ENCODE measurements at regions of chr4 and their contacts with region 1.

Region 1: GRCh38 chr4:2536193-2537010 is at the start of gene FAM193A:
- DNase-seq: peak; percentile 94
- ATAC-seq: peak; percentile 96
- H3K4me3 ChIP-seq: peak within 1 kb of the TSS; percentile 95
- H3K27ac ChIP-seq: peak within 1 kb of the TSS; percentile 83
- H3K4me1 ChIP-seq: peaks cover 8% of the 10 kb centered on the region
- H3K27me3 ChIP-seq: no peaks in the 10 kb centered on the region
- CTCF ChIP-seq: no peak
- EP300 ChIP-seq: 0 out of 4 replicates have a peak, but pooled peaks of 1 of the 2 experiments have one; percentile 49
- POLR2A ChIP-seq: peak; percentile 81
- RAD21 ChIP-seq: no peak
- polyA plus RNA-seq, gene FAM193A: 0.52 to 0.91 TPM

Region 2: DNA sequence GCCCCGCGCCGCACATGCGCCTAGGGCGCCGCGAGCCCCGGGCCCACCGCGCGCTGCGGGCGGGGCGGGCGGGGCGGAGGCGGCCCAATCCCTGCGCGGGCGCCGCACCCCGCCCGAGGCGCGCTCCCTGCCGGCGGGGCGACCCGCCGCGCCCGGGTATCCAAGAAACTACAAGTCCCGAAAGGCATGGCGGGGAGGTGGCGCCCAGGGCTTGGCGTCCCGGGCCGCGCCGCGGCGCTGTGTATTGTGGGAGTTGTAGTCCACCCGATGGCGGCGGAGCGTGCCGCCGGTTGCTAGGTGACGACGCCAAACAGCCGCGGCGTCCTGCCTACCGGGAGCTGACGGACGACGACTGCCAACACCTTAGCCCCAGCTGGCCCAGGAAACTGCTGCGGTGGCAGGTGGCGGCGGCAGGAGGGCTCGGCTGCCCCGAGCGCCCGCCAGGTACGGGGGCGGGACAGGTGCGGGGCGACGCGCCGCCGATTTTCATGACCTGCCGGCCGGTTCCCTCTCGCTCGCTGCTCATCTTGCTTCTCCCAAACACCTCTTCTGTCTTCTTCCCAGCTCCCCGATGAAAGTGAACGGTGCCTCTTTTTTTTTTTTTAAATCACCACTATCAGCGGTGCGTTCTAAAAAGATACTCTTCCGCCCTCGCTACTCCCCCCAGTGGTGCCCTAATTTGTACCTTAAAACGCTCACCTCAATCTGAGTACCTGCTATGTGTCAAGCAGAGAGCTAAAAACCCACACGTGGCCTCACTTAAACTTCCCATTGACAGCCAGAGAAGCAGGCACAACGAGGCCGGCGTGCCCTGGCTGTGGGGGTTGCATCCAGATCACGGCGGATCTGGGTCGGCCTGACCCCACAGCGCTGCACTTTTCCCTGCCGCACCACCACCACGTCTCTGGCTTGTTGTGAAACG is 117.5 kb before region 1 on chr4 and contains the start of gene CFAP99:
- CTCF ChIA-PET with region 1: interaction called, 3 read pairs
- POLR2A ChIA-PET with region 1: interaction called, 5 read pairs
- RAD21 ChIA-PET with region 1: interaction called, 8 read pairs
- SMC1A ChIA-PET with region 1: interaction called, 5 read pairs
- in situ Hi-C with region 1: no loop called
- intact Hi-C with region 1: loop called (anchors 5 kb)
- DNase-seq: peak; percentile 72
- ATAC-seq: peak; percentile 93
- H3K4me3 ChIP-seq: peak within 1 kb of the TSS; percentile 67
- H3K27ac ChIP-seq: no peak within 1 kb of the TSS
- H3K4me1 ChIP-seq: peaks cover 23% of the 10 kb centered on the region
- H3K27me3 ChIP-seq: peaks cover 12 to 22% of the 10 kb centered on the region in 2 experiments
- CTCF ChIP-seq: peak in 1 of 3 experiments; percentile 31; a peak in 2 of 6 replicates
- EP300 ChIP-seq: no peak
- POLR2A ChIP-seq: no peak
- RAD21 ChIP-seq: no peak
- polyA plus RNA-seq, gene CFAP99: not detected

Region 3: GRCh38 chr4:2552806-2553205 is 16.4 kb after region 1 on chr4:
- CTCF ChIA-PET with region 1: interaction called, 3 read pairs
- POLR2A ChIA-PET with region 1: interaction called, 5 read pairs
- RAD21 ChIA-PET with region 1: interaction called, 5 read pairs
- SMC1A ChIA-PET with region 1: interaction called, 10 read pairs
- in situ Hi-C with region 1: no loop called
- intact Hi-C with region 1: no loop called
- DNase-seq: no peak
- ATAC-seq: no peak
- H3K4me3 ChIP-seq: no peak overlapping the region
- H3K27ac ChIP-seq: no peak overlapping the region
- H3K4me1 ChIP-seq: no peaks in the 10 kb centered on the region; the same call in none of the 2 replicates
- H3K27me3 ChIP-seq: no peaks in the 10 kb centered on the region
- CTCF ChIP-seq: no peak
- EP300 ChIP-seq: no peak
- POLR2A ChIP-seq: no peak
- RAD21 ChIP-seq: no peak

Region 4: DNA sequence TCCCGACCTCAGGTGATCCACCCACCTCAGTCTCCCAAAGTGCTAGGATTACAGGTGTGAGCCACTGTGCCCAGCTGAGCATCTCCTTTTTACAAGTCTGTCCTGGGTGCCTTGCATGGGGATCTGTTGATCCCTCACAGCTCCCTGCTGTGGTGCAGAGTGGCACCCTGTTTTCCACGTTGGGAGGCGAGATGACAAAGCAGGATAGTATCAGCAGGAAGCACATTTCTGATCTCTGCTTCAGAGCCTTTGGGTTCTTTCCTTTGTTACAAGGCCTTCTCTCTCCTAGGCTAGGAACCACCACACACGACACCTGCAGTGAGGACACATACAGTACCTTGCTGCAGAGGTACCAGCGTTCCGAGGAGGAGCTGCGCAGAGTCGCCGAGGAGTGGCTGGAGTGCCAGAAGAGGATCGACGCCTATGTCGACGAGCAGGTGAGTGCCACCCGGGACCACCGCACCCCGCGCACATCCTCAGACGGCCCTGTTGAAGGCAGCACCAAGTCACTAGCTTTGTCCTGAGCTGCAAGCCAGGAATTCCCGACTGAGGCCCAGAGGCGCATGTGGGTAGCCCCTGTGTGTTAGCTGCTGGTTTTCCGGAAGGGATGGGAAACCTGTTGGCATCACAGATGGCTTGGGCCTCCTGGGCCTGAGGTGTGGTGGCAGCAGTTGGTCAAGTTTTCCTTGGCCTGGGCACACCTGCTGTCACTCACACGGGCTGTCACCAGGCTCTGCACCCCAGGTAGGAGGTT is 110.2 kb after region 1 on chr4:
- CTCF ChIA-PET with region 1: no interaction called
- POLR2A ChIA-PET with region 1: no interaction called
- RAD21 ChIA-PET with region 1: no interaction called
- SMC1A ChIA-PET with region 1: no interaction called
- in situ Hi-C with region 1: no loop called
- intact Hi-C with region 1: no loop called
- DNase-seq: no peak
- ATAC-seq: no peak
- H3K4me3 ChIP-seq: no peak overlapping the region
- H3K27ac ChIP-seq: no peak overlapping the region
- H3K4me1 ChIP-seq: no peaks in the 10 kb centered on the region
- H3K27me3 ChIP-seq: no peaks in the 10 kb centered on the region
- CTCF ChIP-seq: no peak
- EP300 ChIP-seq: no peak
- POLR2A ChIP-seq: peak; percentile 37; the same call in 1 of the 2 replicates
- RAD21 ChIP-seq: no peak

Measured in GM12878 (cell line).